Panc1 (cell line): ENCODE measurements at regions of chr21 and their contacts with region 1.

Region 1: GRCh38 chr21:36603221-36603620 is 95.7 kb upstream of the SIM2 start:
- DNase-seq: no peak
- ATAC-seq: no peak
- H3K4me3 ChIP-seq: no peak overlapping the region
- H3K27ac ChIP-seq: no peak overlapping the region
- H3K4me1 ChIP-seq: no peaks in the 10 kb centered on the region
- H3K27me3 ChIP-seq: no peaks in the 10 kb centered on the region; the same call in 1 of the 2 replicates
- CTCF ChIP-seq: no peak

Region 2: DNA sequence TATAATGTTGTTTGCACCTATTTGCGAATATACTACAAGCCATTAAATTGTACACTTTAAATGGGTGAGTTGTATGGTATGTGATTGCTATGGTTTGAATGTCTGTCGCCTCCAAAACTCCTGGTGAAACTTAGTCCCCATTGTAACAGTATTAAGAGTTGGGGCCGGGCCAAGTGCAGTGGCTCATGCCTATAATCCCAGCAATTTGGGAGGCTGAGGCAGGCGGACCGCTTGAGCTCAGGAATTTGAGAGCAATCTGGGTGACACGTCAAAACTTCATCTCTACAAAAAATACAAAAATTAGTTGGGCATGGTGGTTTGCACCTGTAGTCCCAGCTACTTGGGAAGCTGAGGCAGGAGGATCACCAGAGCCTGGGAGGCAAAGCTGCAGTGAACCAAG is 83.7 kb after region 1 on chr21:
- CTCF ChIA-PET with region 1: interaction called, 17 read pairs
- POLR2A ChIA-PET with region 1: no interaction called
- in situ Hi-C with region 1: no loop called
- intact Hi-C with region 1: no loop called
- DNase-seq: no peak
- ATAC-seq: no peak
- H3K4me3 ChIP-seq: no peak overlapping the region
- H3K27ac ChIP-seq: no peak overlapping the region
- H3K4me1 ChIP-seq: no peaks in the 10 kb centered on the region
- H3K27me3 ChIP-seq: no peaks in the 10 kb centered on the region
- CTCF ChIP-seq: no peak